Transverse colon (tissue), 4 donors: ENCODE measurements at regions of chr15 and their contacts with region 1.

Region 1: GRCh38 chr15:76636059-76636458 is 269.1 kb downstream of the SCAPER start:
- DNase-seq: no peak
- H3K4me3 ChIP-seq: no peak overlapping the region
- H3K27ac ChIP-seq: no peak overlapping the region
- H3K4me1 ChIP-seq: no peaks in the 10 kb centered on the region
- H3K27me3 ChIP-seq: no peaks in the 10 kb centered on the region
- CTCF ChIP-seq: no peak
- EP300 ChIP-seq: no peak
- POLR2A ChIP-seq: no peak

Region 2: DNA sequence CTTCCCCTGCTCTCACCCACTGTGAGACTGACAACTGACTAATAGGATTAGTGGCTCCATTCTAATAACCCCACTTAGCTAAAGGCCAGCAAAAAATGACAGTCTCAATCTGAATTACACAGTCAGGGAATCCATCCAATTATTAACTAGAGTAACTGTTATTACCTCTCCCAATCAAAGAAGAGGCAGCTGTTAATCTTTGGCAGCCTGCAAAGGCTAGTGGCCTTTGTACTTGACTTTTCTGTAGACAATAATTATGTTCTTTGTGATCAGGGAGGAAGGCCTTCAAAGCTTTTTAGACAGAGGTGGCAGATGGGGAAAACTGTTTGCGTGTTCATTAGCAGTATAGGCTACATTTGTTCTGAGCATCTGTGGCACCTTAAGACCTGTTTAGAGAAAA is 121.8 kb before region 1 on chr15:
- in situ Hi-C with region 1: no loop called
- intact Hi-C with region 1: no loop called
- DNase-seq: no peak
- H3K4me3 ChIP-seq: no peak overlapping the region
- H3K27ac ChIP-seq: no peak overlapping the region
- H3K4me1 ChIP-seq: peaks cover 0 to 14% (median 3%) of the 10 kb centered on the region in 4 donors
- H3K27me3 ChIP-seq: no peaks in the 10 kb centered on the region
- CTCF ChIP-seq: no peak
- EP300 ChIP-seq: no peak
- POLR2A ChIP-seq: no peak

Region 3: GRCh38 chr15:76696871-76697270 is 60.8 kb after region 1 on chr15:
- in situ Hi-C with region 1: loop called in 1 of 4 experiments (anchors 10 kb)
- intact Hi-C with region 1: no loop called
- DNase-seq: no peak
- H3K4me3 ChIP-seq: no peak overlapping the region
- H3K27ac ChIP-seq: no peak overlapping the region
- H3K4me1 ChIP-seq: peaks cover 0 to 3% (median 0%) of the 10 kb centered on the region in 4 donors
- H3K27me3 ChIP-seq: no peaks in the 10 kb centered on the region
- CTCF ChIP-seq: no peak
- EP300 ChIP-seq: no peak
- POLR2A ChIP-seq: no peak